CD4-positive, alpha-beta memory T cell (primary cell): ENCODE measurements at regions of chr1 and their contacts with region 1.

Region 1: DNA sequence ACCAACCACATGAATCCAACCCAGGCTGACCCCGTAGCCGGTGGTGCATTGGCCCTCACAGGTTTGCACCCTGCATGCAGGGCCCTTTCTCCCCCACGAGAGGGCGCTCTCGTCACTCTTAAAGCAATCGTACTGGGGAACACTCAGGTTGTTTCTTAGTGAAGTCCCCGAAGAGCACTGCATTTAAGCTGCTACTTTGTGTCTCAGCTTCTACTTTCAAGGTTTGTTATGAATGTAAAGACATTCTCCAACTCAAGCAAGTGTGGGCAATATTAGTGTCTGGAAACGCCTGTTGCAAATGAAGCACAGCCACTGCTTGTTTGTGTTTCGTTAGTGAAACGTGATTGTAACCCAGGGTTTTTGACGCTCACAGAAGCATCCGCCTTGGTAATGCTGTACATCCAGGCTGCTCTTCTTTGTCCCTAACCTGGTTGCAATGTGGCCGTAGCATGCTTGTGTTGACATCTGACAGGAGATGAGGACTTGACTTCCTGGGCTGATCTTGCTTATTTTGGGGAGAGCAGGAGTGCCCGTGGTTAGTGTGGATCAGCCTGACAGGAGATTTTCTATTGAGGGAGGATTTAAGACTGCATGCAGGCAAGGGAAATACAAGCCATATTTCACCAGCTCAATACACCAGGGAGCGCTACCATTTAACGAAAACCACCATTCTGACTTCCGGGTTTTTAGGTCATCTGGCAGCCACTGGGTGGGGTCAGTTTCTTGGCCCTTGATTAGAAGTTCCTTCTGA is 79.8 kb downstream of the ST6GALNAC3 start:
- DNase-seq: peak; percentile 67 to 78 (median 77)
- H3K4me3 ChIP-seq: peak overlapping the region; percentile 24 to 60
- H3K4me3 Mint-ChIP-seq: peak overlapping the region; percentile 89 to 96 (median 92)
- H3K27ac ChIP-seq: peak overlapping the region; percentile 40
- H3K27ac Mint-ChIP-seq: peak overlapping the region; percentile 69 to 97 (median 91)
- H3K4me1 ChIP-seq: peaks cover 7% of the 10 kb centered on the region
- H3K4me1 Mint-ChIP-seq: peaks cover 5 to 13% (median 7%) of the 10 kb centered on the region in 4 donors
- H3K27me3 ChIP-seq: no peaks in the 10 kb centered on the region
- H3K27me3 Mint-ChIP-seq: peaks cover 2 to 5% of the 10 kb centered on the region in 2 donors

Region 2: DNA sequence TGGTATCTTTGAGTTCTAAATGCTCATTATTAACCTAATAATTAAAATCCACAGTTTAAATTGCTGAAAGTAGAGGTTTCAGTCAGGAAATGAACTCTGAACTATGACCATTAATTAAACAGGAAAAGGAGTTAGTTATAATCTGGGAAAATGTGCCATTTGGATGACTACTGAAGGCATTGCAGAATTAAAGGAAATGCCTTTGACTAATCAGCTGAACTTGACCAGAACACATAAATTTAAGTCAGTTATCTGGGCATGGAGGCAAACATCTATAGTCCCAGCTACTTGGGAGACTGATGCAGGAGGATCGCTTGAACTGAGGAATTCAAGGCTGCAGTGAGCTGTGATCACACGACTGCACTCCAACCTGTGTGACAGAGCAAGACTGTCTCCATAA is 575.3 kb before region 1 on chr1:
- CTCF ChIA-PET with region 1: no interaction called
- POLR2A ChIA-PET with region 1: no interaction called
- intact Hi-C with region 1: no loop called
- DNase-seq: no peak
- H3K4me3 ChIP-seq: no peak overlapping the region
- H3K4me3 Mint-ChIP-seq: no peak overlapping the region
- H3K27ac ChIP-seq: no peak overlapping the region
- H3K27ac Mint-ChIP-seq: no peak overlapping the region
- H3K4me1 ChIP-seq: no peaks in the 10 kb centered on the region
- H3K4me1 Mint-ChIP-seq: no peaks in the 10 kb centered on the region
- H3K27me3 ChIP-seq: no peaks in the 10 kb centered on the region
- H3K27me3 Mint-ChIP-seq: peaks cover 2 to 4% of the 10 kb centered on the region in 2 donors

Region 3: DNA sequence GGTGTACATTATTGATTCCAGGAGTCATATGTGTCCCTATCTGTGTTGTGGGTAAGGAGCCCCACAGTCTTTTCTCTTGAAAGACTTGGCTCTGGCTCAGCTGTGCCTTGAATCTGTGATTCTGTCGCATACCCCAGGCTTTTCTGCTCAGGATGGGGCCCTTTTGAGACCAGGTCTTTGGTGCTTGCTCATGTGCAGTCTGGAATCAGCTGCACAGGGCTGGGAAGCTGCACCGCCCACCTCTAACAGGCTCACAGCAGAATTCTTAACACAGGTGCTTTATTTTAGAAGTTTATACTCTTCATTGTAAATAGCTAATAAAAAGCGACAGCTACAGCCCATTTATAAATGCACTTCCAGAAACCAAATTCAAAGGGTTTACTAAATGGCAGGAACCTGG is 18.5 kb before region 1 on chr1:
- CTCF ChIA-PET with region 1: interaction called, 11 read pairs
- POLR2A ChIA-PET with region 1: no interaction called
- intact Hi-C with region 1: no loop called
- DNase-seq: no peak
- H3K4me3 ChIP-seq: no peak overlapping the region
- H3K4me3 Mint-ChIP-seq: no peak overlapping the region
- H3K27ac ChIP-seq: no peak overlapping the region
- H3K27ac Mint-ChIP-seq: no peak overlapping the region
- H3K4me1 ChIP-seq: no peaks in the 10 kb centered on the region
- H3K4me1 Mint-ChIP-seq: no peaks in the 10 kb centered on the region
- H3K27me3 ChIP-seq: no peaks in the 10 kb centered on the region
- H3K27me3 Mint-ChIP-seq: peaks cover 2 to 4% of the 10 kb centered on the region in 2 donors

Region 4: GRCh38 chr1:76294482-76295194 is 140.3 kb after region 1 on chr1:
- CTCF ChIA-PET with region 1: interaction called, 12 read pairs
- POLR2A ChIA-PET with region 1: interaction called, 3 read pairs
- intact Hi-C with region 1: loop called (anchors 10 kb)
- DNase-seq: peak in 4 of 5 donors; percentile 32 to 50 (median 40)
- H3K4me3 ChIP-seq: peak overlapping the region; percentile 12 to 13
- H3K4me3 Mint-ChIP-seq: peak overlapping the region; percentile 68 to 86 (median 78)
- H3K27ac ChIP-seq: no peak overlapping the region
- H3K27ac Mint-ChIP-seq: peak overlapping the region; percentile 47 to 85 (median 73)
- H3K4me1 ChIP-seq: peaks cover 86% of the 10 kb centered on the region
- H3K4me1 Mint-ChIP-seq: peaks cover 31 to 62% (median 50%) of the 10 kb centered on the region in 4 donors
- H3K27me3 ChIP-seq: no peaks in the 10 kb centered on the region
- H3K27me3 Mint-ChIP-seq: no peaks in the 10 kb centered on the region

Region 5: GRCh38 chr1:76510672-76511557 is 356.5 kb after region 1 on chr1:
- CTCF ChIA-PET with region 1: no interaction called
- POLR2A ChIA-PET with region 1: no interaction called
- intact Hi-C with region 1: loop called (anchors 10 kb)
- DNase-seq: no peak
- H3K4me3 ChIP-seq: no peak overlapping the region
- H3K4me3 Mint-ChIP-seq: no peak overlapping the region
- H3K27ac ChIP-seq: no peak overlapping the region
- H3K27ac Mint-ChIP-seq: peak overlapping the region in 3 of 7 donors; percentile 17 to 58 (median 50)
- H3K4me1 ChIP-seq: no peaks in the 10 kb centered on the region
- H3K4me1 Mint-ChIP-seq: peaks cover 0 to 7% (median 1%) of the 10 kb centered on the region in 4 donors
- H3K27me3 ChIP-seq: no peaks in the 10 kb centered on the region
- H3K27me3 Mint-ChIP-seq: no peaks in the 10 kb centered on the region

Region 6: DNA sequence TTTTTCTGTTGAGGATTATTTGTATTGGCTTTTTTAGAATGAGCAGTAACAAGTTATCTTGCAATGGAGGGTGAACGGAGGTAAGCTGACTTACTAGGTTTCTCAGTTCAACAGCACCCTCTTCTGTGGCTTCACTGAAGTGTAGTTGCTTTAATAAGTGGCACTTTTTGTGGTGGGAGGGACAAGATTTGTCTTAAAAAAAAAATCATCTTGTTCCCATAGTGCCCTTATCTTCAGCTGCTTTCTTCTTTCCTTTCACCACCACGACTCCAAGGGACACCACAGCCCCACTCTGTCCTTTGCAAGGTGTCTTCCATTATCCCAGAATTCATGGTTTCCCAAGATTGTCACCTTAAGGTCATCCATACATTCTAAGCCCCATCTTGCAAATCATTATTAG is 971.9 kb after region 1 on chr1:
- CTCF ChIA-PET with region 1: interaction called, 4 read pairs
- POLR2A ChIA-PET with region 1: no interaction called
- intact Hi-C with region 1: loop called (anchors 1 kb)
- DNase-seq: peak in 4 of 5 donors; percentile 5 to 28 (median 18)
- H3K4me3 ChIP-seq: no peak overlapping the region
- H3K4me3 Mint-ChIP-seq: no peak overlapping the region
- H3K27ac ChIP-seq: no peak overlapping the region
- H3K27ac Mint-ChIP-seq: peak overlapping the region in 1 of 7 donors; percentile 46
- H3K4me1 ChIP-seq: no peaks in the 10 kb centered on the region
- H3K4me1 Mint-ChIP-seq: peaks cover 0 to 1% (median 0%) of the 10 kb centered on the region in 4 donors
- H3K27me3 ChIP-seq: no peaks in the 10 kb centered on the region
- H3K27me3 Mint-ChIP-seq: no peaks in the 10 kb centered on the region

Region 7: DNA sequence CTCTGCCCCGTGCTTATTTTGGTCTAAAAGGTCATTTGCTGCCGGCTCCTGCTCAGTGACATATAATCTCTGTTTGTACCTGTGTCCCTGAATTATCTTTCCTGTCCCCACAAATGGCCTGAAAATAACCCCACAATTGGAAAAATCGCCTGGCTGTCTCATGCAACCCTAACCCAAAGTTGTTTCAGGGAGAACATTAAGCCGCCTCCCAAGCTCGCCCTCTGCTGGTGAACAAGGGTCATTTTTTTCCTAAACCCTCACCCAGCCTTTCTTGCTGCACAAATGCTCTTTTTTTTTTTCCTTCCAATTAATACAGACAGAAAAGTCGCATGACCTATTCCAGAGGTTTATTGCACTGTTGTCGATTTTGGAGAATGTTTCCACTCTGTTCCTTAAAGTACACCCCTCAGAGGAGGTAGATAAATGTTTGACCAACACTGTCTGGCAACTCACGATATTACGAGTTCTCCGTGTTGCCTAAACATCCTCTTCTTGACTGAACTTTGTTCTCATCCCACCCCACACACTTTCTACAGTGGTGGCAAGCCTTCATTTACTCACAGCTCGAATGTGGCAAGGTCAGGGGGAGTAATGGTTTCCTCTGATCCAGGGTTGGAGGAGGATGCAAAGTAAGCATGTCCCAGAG is 1379.4 kb after region 1 on chr1:
- CTCF ChIA-PET with region 1: interaction called, 9 read pairs
- POLR2A ChIA-PET with region 1: no interaction called
- intact Hi-C with region 1: loop called (anchors 1 kb)
- DNase-seq: peak; percentile 60 to 65 (median 64)
- H3K4me3 ChIP-seq: no peak overlapping the region
- H3K4me3 Mint-ChIP-seq: peak overlapping the region in 5 of 8 donors; percentile 17 to 65 (median 32)
- H3K27ac ChIP-seq: no peak overlapping the region
- H3K27ac Mint-ChIP-seq: peak overlapping the region in 3 of 7 donors; percentile 32 to 83 (median 39)
- H3K4me1 ChIP-seq: peaks cover 3% of the 10 kb centered on the region
- H3K4me1 Mint-ChIP-seq: peaks cover 4 to 8% (median 5%) of the 10 kb centered on the region in 4 donors
- H3K27me3 ChIP-seq: no peaks in the 10 kb centered on the region
- H3K27me3 Mint-ChIP-seq: no peaks in the 10 kb centered on the region